Posterior vena cava (tissue), 2 donors: ENCODE measurements at regions of chrX and their contacts with region 1.

Region 1: DNA sequence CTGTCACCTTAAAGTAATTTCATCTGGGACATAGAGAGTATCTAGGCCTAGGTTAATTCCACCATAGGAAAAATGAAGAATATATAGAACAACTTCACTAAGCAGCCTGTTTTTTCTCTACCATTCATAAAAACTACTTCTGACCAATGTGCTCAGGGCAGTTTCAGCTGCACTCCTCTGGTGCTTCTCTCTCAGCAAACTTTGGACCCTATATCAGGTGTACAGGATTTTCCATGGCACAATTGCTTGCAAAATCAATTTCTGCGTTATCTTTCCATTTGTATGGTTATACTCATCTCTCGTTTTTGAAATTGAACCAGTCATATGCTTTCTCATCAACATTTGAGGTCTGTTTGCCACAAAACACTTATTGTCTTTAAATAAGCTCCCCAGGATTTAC is 52.1 kb upstream of the FMR1 start:
- DNase-seq: no peak

Region 2: GRCh38 chrX:147899715-147900114 is 40.0 kb after region 1 on chrX:
- intact Hi-C with region 1: loop called in 1 of 2 experiments (anchors 2 kb)
- DNase-seq: no peak